GM18951 (cell line): ENCODE measurements at regions of chr15 and their contacts with region 1.

Region 1: DNA sequence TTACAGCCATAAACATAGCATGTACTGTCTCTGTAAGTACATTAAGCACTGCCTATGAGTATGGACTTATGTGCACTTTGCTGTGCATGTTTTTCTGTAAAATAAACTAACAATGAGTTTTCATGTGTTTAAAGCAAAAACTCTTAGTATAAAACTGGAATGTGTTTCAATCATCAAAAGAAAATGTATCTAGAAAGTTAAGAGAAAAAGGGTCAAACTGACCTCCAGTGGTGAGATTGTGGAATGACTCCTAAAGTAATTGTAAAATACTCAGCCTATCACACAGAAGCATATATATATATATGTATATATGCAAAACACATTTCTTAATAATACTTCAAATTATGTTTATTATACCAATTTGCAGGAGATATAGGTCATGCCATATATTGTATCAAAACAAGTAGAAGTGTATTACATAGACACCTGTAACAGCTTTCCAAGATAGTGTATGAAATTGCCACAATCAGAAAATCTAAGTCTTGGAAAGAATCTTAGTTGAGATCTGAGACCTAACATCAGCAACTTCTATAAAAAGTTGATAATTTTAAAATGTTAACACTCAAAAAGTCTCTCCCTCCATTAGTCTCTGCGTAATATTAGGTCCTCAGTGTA is 199.6 kb downstream of the FMN1 start:
- POLR2A ChIP-seq: no peak

Region 2: GRCh38 chr15:32657198-32657883 is 337.6 kb before region 1 on chr15:
- in situ Hi-C with region 1: loop called (anchors 5 kb)
- POLR2A ChIP-seq: no peak

Region 3: DNA sequence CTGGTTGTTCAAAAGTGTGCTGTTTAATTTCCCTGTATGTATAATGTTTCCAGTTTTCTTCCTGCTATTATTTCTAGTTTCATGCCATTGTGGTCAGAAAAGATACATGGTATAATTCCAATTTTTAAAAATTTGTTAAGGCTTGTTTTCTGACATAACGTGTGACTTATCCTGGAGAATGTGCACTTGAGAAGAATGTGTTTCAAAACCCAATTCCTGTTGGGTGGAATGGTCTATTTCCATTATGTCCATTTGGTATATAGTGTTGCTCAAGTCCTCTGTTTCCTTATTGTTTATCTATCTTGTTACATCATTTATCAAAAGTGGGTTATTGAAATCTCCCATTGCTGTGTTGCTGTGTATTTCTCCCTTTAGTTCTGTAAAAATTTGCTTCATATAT is 61.7 kb before region 1 on chr15:
- in situ Hi-C with region 1: no loop called
- POLR2A ChIP-seq: no peak

Region 4: DNA sequence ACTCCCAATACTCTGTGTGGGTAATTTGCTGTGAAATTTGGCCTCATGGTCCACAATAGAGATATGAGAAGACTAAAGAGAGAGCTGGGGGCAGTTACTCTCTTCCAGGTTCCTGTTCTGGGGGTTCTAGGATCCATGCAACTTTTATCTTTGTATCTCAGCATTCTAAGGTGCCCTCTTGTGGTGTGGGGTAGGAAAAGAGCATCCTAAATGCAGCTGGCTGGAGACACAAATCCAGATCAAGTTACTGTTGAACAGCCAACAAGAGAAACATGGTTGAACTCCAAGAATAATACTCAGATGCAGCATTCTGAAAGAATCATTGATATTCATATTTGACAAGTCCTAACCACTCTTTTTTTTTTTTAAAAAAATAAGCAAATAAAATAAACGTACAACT is 38.9 kb before region 1 on chr15:
- in situ Hi-C with region 1: no loop called
- POLR2A ChIP-seq: no peak